ENCODE measurements at regions of chr20 and their contacts with region 1.

Region 1: DNA sequence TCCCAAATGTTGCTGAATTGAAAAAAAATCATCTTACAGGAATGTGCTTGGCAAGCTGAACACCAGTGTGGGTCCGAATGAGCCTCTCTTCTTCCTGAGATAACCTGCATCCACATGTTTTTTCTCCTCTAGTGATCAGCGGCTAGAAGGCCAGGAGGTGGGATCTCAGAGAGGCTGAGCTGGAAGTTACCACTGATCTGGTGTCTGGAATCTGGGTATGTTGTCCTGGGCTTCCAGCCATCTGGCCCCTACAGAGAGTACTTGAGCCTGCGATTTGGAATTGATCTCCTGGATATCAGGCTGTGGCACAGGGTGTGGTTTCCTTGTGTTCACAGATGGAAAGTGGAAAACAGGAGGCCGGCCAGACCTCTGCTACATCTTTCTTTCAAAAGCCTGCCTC is 35.9 kb downstream of the SULF2 start:
- DNase-seq: peak in 1 of 2 donors; percentile 47
- ATAC-seq: peak; percentile 63 to 87 (median 84)
- H3K4me3 ChIP-seq: no peak overlapping the region
- H3K27ac ChIP-seq: peak overlapping the region in 8 of 10 donors; percentile 4 to 70 (median 40)
- H3K4me1 ChIP-seq: peaks cover 0 to 35% (median 20%) of the 10 kb centered on the region in 9 donors
- H3K27me3 ChIP-seq: no peaks in the 10 kb centered on the region
- CTCF ChIP-seq: no peak

Region 2: DNA sequence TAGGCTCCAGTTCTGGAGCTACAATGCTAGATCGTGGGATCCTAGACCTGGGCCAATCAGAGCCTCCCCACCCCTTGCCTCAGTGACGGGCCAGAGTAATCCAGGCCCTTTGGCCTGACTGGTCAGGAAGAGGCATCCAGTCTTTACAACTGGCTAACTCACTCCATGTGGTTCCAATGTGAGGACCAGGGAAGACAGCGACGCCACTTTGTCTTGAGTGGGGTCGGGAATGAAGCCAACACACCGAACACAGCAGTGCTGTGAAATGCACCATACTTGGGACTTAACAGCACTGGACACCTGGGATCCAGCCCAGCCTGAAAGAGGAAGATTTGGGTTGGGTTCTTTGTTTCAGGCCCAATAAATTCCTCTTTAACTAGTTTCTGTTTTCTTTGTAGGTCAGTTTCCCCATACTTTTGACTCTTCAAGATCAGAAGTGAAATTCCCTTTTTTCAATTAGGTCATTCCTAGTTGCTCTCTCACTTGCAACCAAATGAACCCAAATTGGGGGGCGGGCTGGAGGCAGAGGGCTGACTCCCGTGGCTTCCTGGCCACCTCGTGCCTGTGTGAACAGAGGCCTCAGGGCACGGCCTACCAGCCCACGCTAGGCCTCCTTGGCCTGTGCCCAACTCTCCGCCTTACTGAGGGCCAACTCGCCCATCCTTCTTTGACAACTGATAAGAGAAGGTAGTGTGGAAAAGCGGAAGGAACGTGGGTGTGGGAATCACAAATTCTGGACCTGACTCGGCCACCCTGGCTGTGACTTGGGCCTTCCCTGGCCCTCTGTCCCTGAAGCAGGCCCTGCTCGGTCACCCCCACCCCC is 18.8 kb after region 1 on chr20:
- intact Hi-C with region 1: loop called in 1 of 10 experiments (anchors 1 kb)
- DNase-seq: peak; percentile 38 to 40
- ATAC-seq: peak; percentile 20 to 68 (median 47)
- H3K4me3 ChIP-seq: no peak overlapping the region
- H3K27ac ChIP-seq: peak overlapping the region in 7 of 10 donors; percentile 23 to 84 (median 44)
- H3K4me1 ChIP-seq: peaks cover 0 to 78% (median 40%) of the 10 kb centered on the region in 9 donors
- H3K27me3 ChIP-seq: peaks cover 0 to 15% (median 6%) of the 10 kb centered on the region in 7 donors
- CTCF ChIP-seq: no peak